ENCODE measurements at regions of chr2 and their contacts with region 1.

Region 1: DNA sequence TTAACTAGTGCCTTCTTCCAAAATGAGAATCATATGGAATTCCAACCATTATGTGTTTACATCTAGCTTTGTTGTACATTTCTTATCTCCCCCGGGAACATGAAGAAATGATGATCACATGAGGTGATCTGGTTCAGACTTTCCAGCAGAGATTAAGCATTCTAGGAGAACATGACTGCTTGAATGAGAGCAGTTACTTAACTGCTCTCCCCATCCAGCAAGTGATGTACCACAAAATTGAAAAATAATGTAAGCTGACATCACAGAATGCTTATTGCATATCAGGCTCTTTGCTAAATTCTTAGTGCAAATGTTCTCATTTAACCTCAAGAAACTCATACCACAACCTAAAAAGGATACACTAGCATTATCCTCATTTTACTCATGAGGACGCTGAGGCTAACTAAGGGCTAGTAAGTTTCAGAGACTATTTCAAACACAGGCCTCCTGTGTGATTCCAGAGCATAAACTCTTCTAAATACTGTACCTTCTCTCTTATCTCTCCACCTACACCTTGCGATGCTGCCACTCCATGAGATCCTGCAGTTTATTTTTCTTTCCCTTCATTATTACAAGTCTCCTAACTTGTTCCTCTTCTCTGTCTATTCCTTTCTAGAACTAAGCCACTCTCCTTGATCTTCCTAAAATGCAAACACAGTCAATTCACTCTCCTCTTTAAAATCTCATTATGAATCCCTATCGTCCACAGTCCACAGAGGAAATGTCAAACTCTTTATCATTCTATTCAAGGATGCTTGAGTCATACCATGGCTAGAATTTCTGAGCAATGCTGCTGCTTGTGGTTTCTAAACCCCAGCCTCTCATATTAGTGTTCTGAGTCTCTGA is 1224.8 kb upstream of the ZEB2 start:
- DNase-seq: no peak
- ATAC-seq: no peak
- H3K4me3 ChIP-seq: no peak overlapping the region
- H3K27ac ChIP-seq: no peak overlapping the region
- H3K4me1 ChIP-seq: no peaks in the 10 kb centered on the region
- H3K27me3 ChIP-seq: no peaks in the 10 kb centered on the region
- CTCF ChIP-seq: no peak
- EP300 ChIP-seq: no peak
- POLR2A ChIP-seq: no peak
- RAD21 ChIP-seq: no peak

Region 2: GRCh38 chr2:145669301-145669700 is 75.5 kb before region 1 on chr2:
- CTCF ChIA-PET with region 1: no interaction called
- POLR2A ChIA-PET with region 1: no interaction called
- in situ Hi-C with region 1: no loop called
- intact Hi-C with region 1: no loop called
- DNase-seq: no peak
- ATAC-seq: no peak
- H3K4me3 ChIP-seq: no peak overlapping the region
- H3K27ac ChIP-seq: no peak overlapping the region
- H3K4me1 ChIP-seq: no peaks in the 10 kb centered on the region
- H3K27me3 ChIP-seq: no peaks in the 10 kb centered on the region; a peak in 1 of 5 replicates
- CTCF ChIP-seq: no peak
- EP300 ChIP-seq: no peak
- POLR2A ChIP-seq: no peak
- RAD21 ChIP-seq: no peak

Region 3: DNA sequence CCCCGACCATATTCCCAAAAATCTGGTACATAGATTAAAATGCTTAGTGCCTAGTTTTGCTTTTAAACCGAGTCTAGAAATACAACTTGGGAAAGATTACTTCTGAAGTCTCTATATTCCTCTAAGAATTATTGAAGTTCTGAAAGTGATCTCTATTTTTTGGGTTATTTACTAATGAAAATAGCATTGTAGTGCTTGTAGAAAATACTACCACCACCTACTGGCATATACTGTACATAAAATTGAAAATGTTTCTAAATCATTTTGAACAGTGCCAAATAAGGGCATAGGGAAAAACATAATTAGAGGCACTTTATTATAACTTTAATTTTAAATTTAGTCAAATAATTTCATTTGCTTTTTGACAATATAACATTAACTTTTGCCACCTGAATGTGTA is 174.7 kb after region 1 on chr2:
- CTCF ChIA-PET with region 1: no interaction called
- POLR2A ChIA-PET with region 1: no interaction called
- in situ Hi-C with region 1: loop called (anchors 5 kb)
- intact Hi-C with region 1: no loop called
- DNase-seq: no peak
- ATAC-seq: no peak
- H3K4me3 ChIP-seq: no peak overlapping the region
- H3K27ac ChIP-seq: no peak overlapping the region
- H3K4me1 ChIP-seq: peaks cover 8% of the 10 kb centered on the region
- H3K27me3 ChIP-seq: no peaks in the 10 kb centered on the region
- CTCF ChIP-seq: peak; percentile 41
- EP300 ChIP-seq: no peak
- POLR2A ChIP-seq: no peak
- RAD21 ChIP-seq: peak; percentile 22; the same call in 1 of the 2 replicates

Measured in HepG2 (cell line).